GM10248 (cell line): ENCODE measurements at regions of chr19 and their contacts with region 1.

Region 1: GRCh38 chr19:40798223-40798996 is 581 bp upstream of the EGLN2 start:
- DNase-seq: peak; percentile 97
- CTCF ChIP-seq: peak; percentile 61

Region 2: DNA sequence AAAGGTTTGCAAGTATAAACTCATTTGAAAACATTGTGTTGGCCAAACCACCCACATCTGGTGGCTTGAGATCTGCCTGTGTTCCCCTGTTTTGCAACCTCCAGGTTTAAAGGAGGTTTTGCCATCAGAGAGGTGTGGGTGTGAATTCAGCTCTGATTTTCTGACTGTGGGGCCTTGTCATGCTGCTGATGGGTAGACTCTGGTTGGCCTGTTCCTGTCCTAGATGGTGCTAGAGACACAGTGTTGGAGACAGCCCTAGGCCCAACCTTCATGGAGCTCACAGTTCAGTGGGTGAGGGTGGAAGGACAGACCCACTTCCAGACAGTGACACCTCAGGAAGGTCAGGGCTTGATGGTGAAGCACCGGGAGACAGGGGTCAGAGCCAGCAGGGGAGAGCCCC is 12.9 kb before region 1 on chr19:
- CTCF ChIA-PET with region 1: interaction called, 12 read pairs
- POLR2A ChIA-PET with region 1: interaction called, 3 read pairs
- DNase-seq: no peak
- CTCF ChIP-seq: no peak